ENCODE measurements at regions of chr5 and their contacts with region 1.

Region 1: DNA sequence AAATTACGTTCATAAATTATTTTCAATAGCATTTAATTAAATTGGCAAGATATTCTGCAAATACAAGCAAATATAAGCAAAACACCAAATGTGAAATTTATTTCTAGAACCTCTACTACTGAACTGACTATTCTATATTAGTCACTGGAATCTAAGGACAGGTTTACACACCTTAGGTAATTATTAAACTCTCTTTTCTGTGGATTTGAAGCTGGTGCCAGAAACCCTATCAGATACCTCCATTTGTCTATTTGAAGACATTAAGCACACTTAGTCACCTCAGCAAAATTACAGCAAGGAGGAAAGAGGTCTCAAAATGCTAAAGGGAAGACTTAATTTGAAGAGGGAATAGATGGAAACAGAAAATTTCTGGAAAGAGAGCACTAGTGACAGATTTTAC is 83.4 kb downstream of the CPLANE1 start:
- DNase-seq: no peak
- ATAC-seq: no peak

Region 2: GRCh38 chr5:37222176-37222575 is 56.4 kb after region 1 on chr5:
- intact Hi-C with region 1: loop called in 1 of 2 experiments (anchors 10 kb)
- DNase-seq: no peak
- ATAC-seq: no peak

Region 3: DNA sequence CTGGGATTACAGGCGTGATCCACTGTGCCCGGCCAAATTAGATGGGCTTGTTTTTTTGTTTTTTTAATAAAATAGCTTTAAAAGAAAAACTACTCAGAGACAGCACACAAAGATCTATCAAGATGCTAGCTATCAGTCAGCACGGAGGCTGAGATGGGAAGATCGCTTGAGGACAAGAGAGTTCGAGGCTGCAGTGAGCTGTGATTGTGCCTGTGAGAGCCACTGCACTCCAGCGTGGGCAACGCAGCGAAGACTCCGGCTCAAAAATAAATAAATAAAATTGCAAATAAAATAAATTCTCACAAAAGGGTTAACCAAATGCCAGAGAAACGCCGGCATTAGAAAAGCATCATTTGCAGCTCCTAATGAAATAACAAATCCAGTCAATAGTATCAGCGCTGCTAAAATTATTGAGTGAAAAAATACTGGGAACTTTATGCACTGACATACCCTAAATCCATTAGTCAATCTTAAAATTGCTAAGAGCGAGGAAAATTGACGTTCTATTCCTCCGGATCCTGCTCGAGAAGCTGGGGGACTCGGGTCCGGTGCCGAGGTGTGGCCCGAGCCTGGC is 82.7 kb after region 1 on chr5:
- intact Hi-C with region 1: no loop called
- DNase-seq: no peak
- ATAC-seq: no peak